Activated T-helper 2 cell treated with anti-CD3 and anti-CD28 coated beads, Interferon-gamma antibody, Interleukin-2, Interleukin-4, amounts not matched to agents 10 μg/mL and 5 μg/mL and 100 μg/mL, durations not matched to agents 14 hours and 24 hours and 36 hours (primary cell): ENCODE measurements at regions of chr4 and their contacts with region 1.

Region 1: GRCh38 chr4:42656944-42657792 is at the start of gene ATP8A1:
- DNase-seq: peak; percentile 88
- H3K4me3 Mint-ChIP-seq: peak within 1 kb of the TSS; percentile 93
- H3K27ac Mint-ChIP-seq: peak within 1 kb of the TSS; percentile 95
- H3K4me1 Mint-ChIP-seq: peaks cover 43% of the 10 kb centered on the region
- H3K27me3 Mint-ChIP-seq: peaks cover 4% of the 10 kb centered on the region
- total RNA-seq, gene ATP8A1: 14.6 and 19.7 TPM in 2 replicates

Region 2: GRCh38 chr4:42568610-42569207 is 88.5 kb before region 1 on chr4:
- intact Hi-C with region 1: loop called (anchors 1 kb)
- DNase-seq: peak; percentile 26
- H3K4me3 Mint-ChIP-seq: no peak overlapping the region
- H3K27ac Mint-ChIP-seq: no peak overlapping the region
- H3K4me1 Mint-ChIP-seq: no peaks in the 10 kb centered on the region
- H3K27me3 Mint-ChIP-seq: no peaks in the 10 kb centered on the region

Region 3: GRCh38 chr4:42605264-42605663 is 51.9 kb before region 1 on chr4:
- intact Hi-C with region 1: loop called (anchors 2 kb)
- DNase-seq: no peak
- H3K4me3 Mint-ChIP-seq: no peak overlapping the region
- H3K27ac Mint-ChIP-seq: no peak overlapping the region
- H3K4me1 Mint-ChIP-seq: peaks cover 18% of the 10 kb centered on the region
- H3K27me3 Mint-ChIP-seq: no peaks in the 10 kb centered on the region

Region 4: DNA sequence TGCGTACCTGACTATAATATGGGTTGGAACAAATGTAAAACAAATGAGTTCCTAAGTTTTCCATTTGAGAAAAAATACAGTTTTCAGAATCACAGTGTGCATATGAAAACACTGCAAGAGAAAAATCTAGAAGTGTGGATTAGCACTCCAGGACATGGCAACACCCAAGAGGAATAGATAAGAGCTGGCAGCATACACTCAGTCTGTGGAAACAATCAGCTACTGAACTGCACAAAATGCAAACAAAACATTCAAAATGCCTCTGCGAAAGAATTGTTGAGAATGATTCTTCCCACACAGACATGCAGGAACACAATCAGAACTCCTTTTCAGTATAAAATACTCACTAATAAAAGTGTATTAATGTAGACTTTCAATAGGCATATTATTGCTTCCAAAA is 40.1 kb before region 1 on chr4:
- intact Hi-C with region 1: no loop called
- DNase-seq: no peak
- H3K4me3 Mint-ChIP-seq: no peak overlapping the region
- H3K27ac Mint-ChIP-seq: no peak overlapping the region
- H3K4me1 Mint-ChIP-seq: no peaks in the 10 kb centered on the region
- H3K27me3 Mint-ChIP-seq: no peaks in the 10 kb centered on the region

Region 5: DNA sequence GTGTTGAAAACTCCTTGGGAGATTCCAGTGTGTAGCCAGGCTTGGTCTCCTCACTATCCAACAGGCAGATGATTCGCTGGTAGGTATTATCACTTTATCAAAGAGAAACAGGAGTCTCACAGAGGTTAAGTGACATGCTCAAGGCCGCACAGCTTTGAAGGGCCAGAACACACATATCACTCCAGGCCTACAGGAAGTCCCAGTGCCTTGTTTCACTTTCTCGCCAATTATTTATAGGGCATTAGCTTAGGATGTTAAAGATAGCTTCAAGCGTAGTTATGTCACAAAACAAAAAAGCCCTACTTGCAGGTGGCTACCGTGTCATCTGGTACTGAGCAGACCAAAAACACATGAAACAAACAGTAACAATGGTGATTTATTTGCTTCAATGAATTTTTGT is 13.5 kb before region 1 on chr4:
- intact Hi-C with region 1: loop called (anchors 1 kb)
- DNase-seq: no peak
- H3K4me3 Mint-ChIP-seq: no peak overlapping the region
- H3K27ac Mint-ChIP-seq: no peak overlapping the region
- H3K4me1 Mint-ChIP-seq: peaks cover 45% of the 10 kb centered on the region
- H3K27me3 Mint-ChIP-seq: no peaks in the 10 kb centered on the region

Region 6: DNA sequence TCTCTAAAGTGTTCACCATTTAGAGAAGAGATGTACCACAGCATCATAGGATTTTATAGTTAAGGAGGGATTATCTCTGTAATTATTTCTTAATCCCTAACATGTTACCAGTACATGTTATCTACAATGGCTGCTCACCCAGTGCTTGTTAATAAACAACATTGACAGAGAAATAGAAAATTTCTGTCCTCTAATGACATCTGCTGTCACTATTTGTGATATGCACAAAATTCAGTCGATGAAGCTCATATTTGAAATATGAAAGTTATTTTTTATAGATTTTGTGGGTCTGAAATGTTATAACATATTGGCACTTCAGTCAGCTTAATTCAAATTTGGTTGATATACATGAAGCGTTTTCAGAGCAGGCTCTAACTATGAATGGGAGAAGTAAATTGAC is 186.5 kb after region 1 on chr4:
- intact Hi-C with region 1: no loop called
- DNase-seq: no peak
- H3K4me3 Mint-ChIP-seq: no peak overlapping the region
- H3K27ac Mint-ChIP-seq: no peak overlapping the region
- H3K4me1 Mint-ChIP-seq: no peaks in the 10 kb centered on the region
- H3K27me3 Mint-ChIP-seq: peaks cover 3% of the 10 kb centered on the region

Region 7: GRCh38 chr4:43435303-43435702 is 778.1 kb after region 1 on chr4:
- intact Hi-C with region 1: no loop called
- DNase-seq: no peak
- H3K4me3 Mint-ChIP-seq: no peak overlapping the region
- H3K27ac Mint-ChIP-seq: no peak overlapping the region
- H3K4me1 Mint-ChIP-seq: no peaks in the 10 kb centered on the region
- H3K27me3 Mint-ChIP-seq: no peaks in the 10 kb centered on the region